BJ (cell line): ENCODE measurements at regions of chr3 and their contacts with region 1.

Region 1: DNA sequence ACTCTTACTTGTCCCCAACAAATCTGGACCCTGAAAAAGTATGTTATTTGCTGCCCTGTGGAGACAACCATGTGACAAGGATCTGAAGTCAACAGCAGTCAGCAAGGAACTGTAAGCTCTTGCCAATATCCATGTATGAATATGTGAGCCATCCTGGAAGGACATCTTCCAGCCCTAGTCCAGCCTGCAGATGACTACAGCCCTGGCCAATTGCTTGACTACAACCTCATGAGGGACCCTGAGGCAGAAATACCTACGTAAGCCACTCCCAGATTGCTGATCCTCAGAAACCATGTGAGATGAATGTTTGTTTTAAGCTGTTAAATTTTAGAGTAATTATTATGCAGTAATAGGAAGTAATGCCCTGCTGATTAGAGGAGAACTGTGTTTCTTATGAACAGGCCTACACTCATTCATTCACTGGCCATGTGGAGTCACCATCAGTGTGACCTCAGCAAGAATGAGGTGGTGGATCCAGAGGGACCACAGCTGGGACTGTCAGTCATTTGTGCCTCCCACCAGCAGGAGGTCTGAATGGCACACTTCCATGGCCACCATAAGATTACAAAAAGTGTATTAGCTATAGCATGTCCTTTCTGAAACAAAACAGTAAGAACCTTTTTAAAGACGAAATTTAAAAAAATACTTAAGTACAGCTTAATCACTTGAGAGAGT is 92.6 kb downstream of the TFDP2 start:
- DNase-seq: no peak
- H3K4me3 ChIP-seq: no peak overlapping the region
- H3K27me3 ChIP-seq: no peaks in the 10 kb centered on the region
- CTCF ChIP-seq: no peak

Region 2: DNA sequence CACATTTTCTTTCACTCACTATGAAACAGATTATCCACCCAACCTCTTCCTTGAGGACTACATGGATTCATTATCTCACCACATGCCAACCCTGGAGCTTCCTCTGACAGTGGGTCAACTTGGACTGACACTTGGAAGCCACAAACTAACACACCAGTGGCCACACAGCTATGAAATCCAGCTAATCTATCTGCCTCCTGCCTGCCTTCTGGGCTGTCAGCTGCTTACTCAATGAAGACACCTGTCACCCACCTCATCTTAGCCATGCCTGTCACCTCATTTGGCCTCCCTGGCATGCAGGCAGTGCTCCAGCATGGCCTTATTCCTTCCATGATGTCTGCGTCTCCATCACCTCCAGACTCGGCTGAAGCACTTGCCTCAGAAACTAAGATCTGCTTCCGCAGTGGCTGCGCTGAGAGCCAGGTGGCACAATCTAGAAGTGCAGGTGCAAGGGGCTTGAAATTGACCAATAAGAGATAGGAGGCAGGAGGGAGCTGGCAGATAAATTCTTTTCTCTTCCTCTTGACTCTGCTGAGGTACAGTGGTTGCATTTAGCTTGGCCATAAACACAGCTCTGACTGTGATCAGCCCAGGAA is 423.9 kb before region 1 on chr3:
- CTCF ChIA-PET with region 1: no interaction called
- POLR2A ChIA-PET with region 1: no interaction called
- DNase-seq: no peak
- H3K4me3 ChIP-seq: no peak overlapping the region
- H3K27me3 ChIP-seq: no peaks in the 10 kb centered on the region
- CTCF ChIP-seq: no peak

Region 3: DNA sequence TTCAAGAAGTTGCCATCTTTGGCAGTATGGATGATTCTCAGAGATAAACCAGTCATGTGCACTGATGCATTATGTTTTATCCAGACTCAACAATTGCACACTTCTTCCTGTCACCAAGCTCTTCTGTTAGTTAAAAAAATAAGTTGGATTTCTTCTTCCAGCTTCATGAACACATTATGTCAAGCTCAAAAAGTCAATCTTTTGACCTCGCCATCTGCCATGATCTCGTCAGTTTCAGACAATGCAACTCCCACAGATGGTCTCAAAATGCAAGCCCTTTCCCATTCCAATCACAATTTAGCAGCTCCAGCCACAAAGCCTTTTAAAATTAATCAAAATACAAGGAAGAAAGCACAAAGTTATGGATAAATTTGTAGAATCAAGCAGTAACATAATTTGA is 49.8 kb after region 1 on chr3:
- CTCF ChIA-PET with region 1: no interaction called
- POLR2A ChIA-PET with region 1: interaction called, 19 read pairs
- DNase-seq: no peak
- H3K4me3 ChIP-seq: no peak overlapping the region
- H3K27me3 ChIP-seq: no peaks in the 10 kb centered on the region
- CTCF ChIP-seq: no peak